ENCODE measurements at regions of chr10 and their contacts with region 1.

Region 1: GRCh38 chr10:7826971-7827370 is 8.7 kb downstream of the TAF3 start:
- DNase-seq: peak; percentile 25
- H3K27ac ChIP-seq: no peak overlapping the region
- CTCF ChIP-seq: no peak

Region 2: DNA sequence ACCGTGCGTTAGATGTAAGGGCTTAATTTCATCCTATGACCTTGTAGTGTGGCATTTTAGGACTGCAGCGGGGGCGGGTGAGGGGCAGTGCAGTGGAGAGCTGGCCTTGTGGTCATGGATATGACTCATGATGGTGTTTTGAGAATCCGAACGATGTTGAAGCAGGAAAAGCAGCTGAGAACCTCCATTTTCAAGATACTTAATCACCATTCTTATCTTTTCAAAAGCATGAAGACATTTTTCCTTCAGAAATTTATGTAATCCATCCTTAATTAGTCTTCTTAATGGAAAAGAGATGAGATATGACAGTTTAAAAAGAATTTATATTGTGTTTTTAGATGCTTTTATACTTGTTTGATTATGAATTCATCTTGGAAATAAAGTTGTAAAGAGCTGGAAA is 29.4 kb before region 1 on chr10:
- CTCF ChIA-PET with region 1: no interaction called
- POLR2A ChIA-PET with region 1: no interaction called
- DNase-seq: peak; percentile 69
- H3K27ac ChIP-seq: no peak overlapping the region
- CTCF ChIP-seq: no peak

Region 3: DNA sequence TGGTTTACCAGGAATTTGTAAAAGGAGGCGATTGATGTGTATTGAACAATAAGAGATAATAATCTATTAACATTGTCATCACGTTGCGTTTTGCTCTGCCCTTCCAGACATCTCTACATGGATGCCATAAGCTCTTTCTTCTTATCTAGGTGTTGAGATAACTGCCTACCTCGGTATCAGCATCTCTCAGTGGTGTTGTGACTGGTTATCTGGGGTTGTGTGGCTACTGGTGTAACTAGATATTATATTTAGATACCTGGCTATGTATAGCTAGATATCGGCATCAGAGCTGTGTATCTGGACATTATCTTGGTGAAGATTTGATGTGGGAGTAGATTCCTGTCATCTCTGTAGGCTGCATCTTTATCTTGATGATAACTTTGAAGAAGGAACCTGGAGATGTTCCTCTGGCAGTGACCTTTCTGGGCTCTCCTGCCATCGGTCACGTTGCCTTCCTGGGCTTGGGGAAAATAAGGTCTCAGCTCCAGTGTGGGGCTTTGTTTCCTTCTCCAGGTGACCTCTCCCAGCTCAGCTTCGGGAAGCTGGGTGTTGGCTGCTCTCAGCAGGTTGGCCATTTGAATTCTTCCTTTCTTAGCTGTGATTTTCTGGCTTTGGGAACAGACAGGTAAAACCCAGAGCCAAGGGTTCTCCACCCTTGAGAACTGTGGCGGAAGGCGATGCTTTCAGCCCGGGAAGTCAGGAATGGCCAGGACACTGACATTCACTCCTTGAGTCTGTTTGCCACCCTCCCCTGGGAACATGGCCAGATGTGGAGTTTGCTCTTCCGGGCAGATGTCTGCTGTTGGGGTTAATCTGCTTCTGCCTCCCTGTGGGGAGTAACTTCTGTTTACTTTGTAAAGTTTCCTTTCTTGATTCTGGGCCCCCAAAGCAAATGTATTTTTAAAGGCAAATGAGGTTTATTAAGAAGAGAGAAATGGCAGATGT is 245.0 kb after region 1 on chr10:
- CTCF ChIA-PET with region 1: interaction called, 10 read pairs
- POLR2A ChIA-PET with region 1: no interaction called
- DNase-seq: no peak
- H3K27ac ChIP-seq: no peak overlapping the region
- CTCF ChIP-seq: no peak

Measured in RWPE1 (cell line).